CD8-positive, alpha-beta T cell (primary cell): ENCODE measurements at regions of chr14 and their contacts with region 1.

Region 1: GRCh38 chr14:76876076-76876475 is 49.9 kb downstream of the LRRC74A start:
- DNase-seq: peak in 8 of 9 experiments; percentile 24 to 68 (median 51)
- ATAC-seq: peak; percentile 69
- H3K4me3 ChIP-seq: no peak overlapping the region
- H3K4me3 Mint-ChIP-seq: no peak overlapping the region
- H3K27ac ChIP-seq: no peak overlapping the region
- H3K27ac Mint-ChIP-seq: no peak overlapping the region
- H3K4me1 ChIP-seq: no peaks in the 10 kb centered on the region
- H3K4me1 Mint-ChIP-seq: no peaks in the 10 kb centered on the region
- H3K27me3 ChIP-seq: no peaks in the 10 kb centered on the region
- H3K27me3 Mint-ChIP-seq: no peaks in the 10 kb centered on the region
- CTCF ChIP-seq: peak; percentile 76

Region 2: GRCh38 chr14:76710056-76711010 is 165.7 kb before region 1 on chr14:
- CTCF ChIA-PET with region 1: interaction called, 6 read pairs
- POLR2A ChIA-PET with region 1: no interaction called
- intact Hi-C with region 1: loop called in 1 of 2 experiments (anchors 5 kb)
- DNase-seq: peak in 4 of 9 experiments; percentile 23 to 62 (median 44)
- ATAC-seq: no peak
- H3K4me3 ChIP-seq: no peak overlapping the region
- H3K4me3 Mint-ChIP-seq: no peak overlapping the region
- H3K27ac ChIP-seq: no peak overlapping the region
- H3K27ac Mint-ChIP-seq: no peak overlapping the region
- H3K4me1 ChIP-seq: no peaks in the 10 kb centered on the region
- H3K4me1 Mint-ChIP-seq: no peaks in the 10 kb centered on the region
- H3K27me3 ChIP-seq: no peaks in the 10 kb centered on the region
- H3K27me3 Mint-ChIP-seq: peaks cover 13% of the 10 kb centered on the region
- CTCF ChIP-seq: peak; percentile 63

Region 3: DNA sequence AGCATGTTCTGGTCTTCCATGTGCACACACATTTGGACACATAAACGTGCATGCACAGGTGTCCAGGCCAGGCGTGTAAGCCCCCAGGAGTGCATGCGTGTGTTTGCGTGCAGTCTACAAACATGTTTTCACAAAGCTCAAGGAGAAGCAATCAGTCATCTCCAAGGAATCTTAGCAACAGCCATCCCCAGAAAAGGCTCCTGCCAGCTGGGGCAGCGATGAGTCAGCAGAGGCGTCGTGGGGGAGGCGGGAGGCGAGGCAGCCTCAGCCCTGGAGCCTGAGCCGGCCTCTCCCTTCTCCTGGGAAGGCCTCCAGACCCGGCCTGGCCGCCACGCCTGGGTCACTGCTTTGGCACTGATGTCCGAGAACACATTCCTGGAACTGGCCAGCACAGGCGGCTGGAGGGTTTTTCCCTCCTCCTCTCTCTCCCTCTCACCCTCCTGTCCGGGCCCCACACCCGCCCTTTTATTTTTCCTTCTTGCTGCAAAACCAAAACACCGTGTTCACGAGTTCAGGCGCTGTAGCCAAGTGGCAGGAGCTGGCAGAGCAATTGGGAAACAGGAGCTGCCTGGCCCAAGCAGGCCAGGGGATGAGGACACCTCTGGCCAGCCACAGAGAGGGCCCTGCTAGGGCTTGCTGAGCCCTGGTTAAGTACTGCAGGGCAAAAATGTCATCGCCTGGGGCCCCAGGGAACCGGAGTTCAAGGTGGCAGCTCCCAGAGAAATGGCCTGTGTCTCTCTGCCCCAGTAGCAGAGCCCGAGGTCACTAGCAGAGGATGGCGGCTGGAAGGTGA is 42.9 kb after region 1 on chr14:
- CTCF ChIA-PET with region 1: interaction called, 38 read pairs
- POLR2A ChIA-PET with region 1: no interaction called
- intact Hi-C with region 1: no loop called
- DNase-seq: no peak
- ATAC-seq: no peak
- H3K4me3 ChIP-seq: no peak overlapping the region
- H3K4me3 Mint-ChIP-seq: no peak overlapping the region
- H3K27ac ChIP-seq: no peak overlapping the region
- H3K27ac Mint-ChIP-seq: no peak overlapping the region
- H3K4me1 ChIP-seq: peaks cover 17% of the 10 kb centered on the region
- H3K4me1 Mint-ChIP-seq: peaks cover 29% of the 10 kb centered on the region
- H3K27me3 ChIP-seq: no peaks in the 10 kb centered on the region
- H3K27me3 Mint-ChIP-seq: no peaks in the 10 kb centered on the region
- CTCF ChIP-seq: no peak

Region 4: GRCh38 chr14:77028384-77029231 is 152.5 kb after region 1 on chr14 and contains the start of gene IRF2BPL:
- CTCF ChIA-PET with region 1: interaction called, 21 read pairs
- POLR2A ChIA-PET with region 1: interaction called, 4 read pairs
- intact Hi-C with region 1: no loop called
- DNase-seq: peak; percentile 86 to 98 (median 94)
- ATAC-seq: peak; percentile 68
- H3K4me3 ChIP-seq: peak within 1 kb of the TSS; percentile 66 to 94
- H3K4me3 Mint-ChIP-seq: peak within 1 kb of the TSS; percentile 93
- H3K27ac ChIP-seq: peak within 1 kb of the TSS; percentile 90 to 94
- H3K27ac Mint-ChIP-seq: peak within 1 kb of the TSS; percentile 96
- H3K4me1 ChIP-seq: peaks cover 69% of the 10 kb centered on the region
- H3K4me1 Mint-ChIP-seq: peaks cover 60% of the 10 kb centered on the region
- H3K27me3 ChIP-seq: no peaks in the 10 kb centered on the region
- H3K27me3 Mint-ChIP-seq: no peaks in the 10 kb centered on the region
- CTCF ChIP-seq: peak; percentile 2
- total RNA-seq, gene IRF2BPL: 53.7 to 53.9 TPM

Region 5: GRCh38 chr14:77059276-77059915 is 183.3 kb after region 1 on chr14:
- CTCF ChIA-PET with region 1: interaction called, 499 read pairs
- POLR2A ChIA-PET with region 1: no interaction called
- intact Hi-C with region 1: no loop called
- DNase-seq: no peak
- ATAC-seq: no peak
- H3K4me3 ChIP-seq: no peak overlapping the region
- H3K4me3 Mint-ChIP-seq: no peak overlapping the region
- H3K27ac ChIP-seq: no peak overlapping the region
- H3K27ac Mint-ChIP-seq: no peak overlapping the region
- H3K4me1 ChIP-seq: no peaks in the 10 kb centered on the region
- H3K4me1 Mint-ChIP-seq: no peaks in the 10 kb centered on the region
- H3K27me3 ChIP-seq: no peaks in the 10 kb centered on the region
- H3K27me3 Mint-ChIP-seq: no peaks in the 10 kb centered on the region
- CTCF ChIP-seq: no peak

Region 6: DNA sequence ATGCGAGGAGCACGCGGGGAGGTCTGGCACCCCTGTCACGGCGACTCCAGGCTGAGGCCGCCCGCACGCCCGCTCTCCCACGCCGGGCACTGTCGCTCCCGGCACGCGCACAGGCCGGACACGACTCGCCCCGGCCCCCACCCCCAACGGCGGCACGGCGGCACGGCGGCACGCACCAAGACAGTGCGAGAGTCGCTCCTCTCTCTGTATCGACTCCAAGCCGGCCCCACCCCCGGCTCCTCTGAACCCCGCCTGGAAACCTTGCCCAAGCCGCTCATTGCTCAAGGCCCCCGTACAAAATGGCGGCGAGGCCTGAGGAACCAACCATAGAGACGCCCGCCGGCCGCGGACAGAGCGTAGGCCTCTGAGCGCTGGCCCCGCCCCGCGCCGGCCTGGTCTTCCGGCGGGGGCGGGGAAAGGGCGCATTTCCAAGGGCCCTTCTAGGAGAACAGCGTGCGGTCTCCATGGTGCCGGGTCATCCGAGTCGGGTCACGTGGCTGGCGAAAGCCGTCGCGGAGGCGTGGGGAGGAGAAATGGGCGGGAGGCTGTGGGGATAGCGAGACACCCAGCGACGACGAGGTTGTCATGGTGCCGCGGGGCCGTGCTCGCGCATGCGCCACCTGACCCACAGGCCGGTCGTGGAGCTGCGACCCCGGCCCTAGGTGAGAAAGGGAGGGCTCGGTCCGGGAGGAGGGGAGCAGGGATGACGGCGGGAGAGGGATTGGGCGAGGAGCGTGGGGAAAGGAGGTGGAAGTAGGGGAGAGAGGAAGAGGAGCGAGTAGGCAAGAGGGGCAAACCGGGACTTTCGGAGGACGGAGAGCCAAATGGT is 221.8 kb after region 1 on chr14 and contains the start of gene CIPC:
- CTCF ChIA-PET with region 1: interaction called, 87 read pairs
- POLR2A ChIA-PET with region 1: no interaction called
- intact Hi-C with region 1: loop called (anchors 1 kb)
- DNase-seq: peak; percentile 97 to 100 (median 99)
- ATAC-seq: peak; percentile 89
- H3K4me3 ChIP-seq: peak within 1 kb of the TSS; percentile 95 to 97
- H3K4me3 Mint-ChIP-seq: peak within 1 kb of the TSS; percentile 92
- H3K27ac ChIP-seq: peak within 1 kb of the TSS; percentile 97
- H3K27ac Mint-ChIP-seq: peak within 1 kb of the TSS; percentile 98
- H3K4me1 ChIP-seq: peaks cover 16% of the 10 kb centered on the region
- H3K4me1 Mint-ChIP-seq: peaks cover 44% of the 10 kb centered on the region
- H3K27me3 ChIP-seq: no peaks in the 10 kb centered on the region
- H3K27me3 Mint-ChIP-seq: no peaks in the 10 kb centered on the region
- CTCF ChIP-seq: no peak
- total RNA-seq, gene CIPC: 6.0 to 6.3 TPM